GM23248 (cell line): ENCODE measurements at regions of chr10 and their contacts with region 1.

Region 1: DNA sequence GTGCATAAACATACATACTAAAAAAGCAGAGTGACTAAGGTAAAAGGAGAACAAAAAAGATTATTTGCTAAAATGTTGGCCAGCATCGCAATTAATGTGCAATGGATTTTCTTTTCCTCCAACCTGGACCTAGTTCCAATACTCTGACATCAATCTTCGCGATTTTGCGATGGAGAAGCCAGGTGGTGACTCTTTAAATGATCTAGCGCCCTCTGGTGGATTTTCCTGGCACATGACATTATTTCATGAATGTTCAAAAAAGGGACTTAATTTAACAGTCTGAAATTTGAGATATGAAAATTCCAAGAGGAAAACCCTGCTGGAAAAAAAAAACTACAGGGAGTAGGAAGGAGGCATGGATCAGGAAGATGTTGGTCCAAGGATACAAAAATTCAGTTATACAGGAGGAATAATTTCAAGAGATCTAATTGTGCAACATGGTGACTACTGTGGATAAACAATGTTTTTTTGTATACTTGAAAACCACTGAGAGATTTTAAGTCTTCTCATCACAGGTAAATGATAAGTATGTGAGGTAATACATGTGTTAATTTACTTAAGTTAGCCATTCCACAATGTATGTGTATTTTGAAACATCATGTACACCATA is 4.3 kb upstream of the KCNMA1 start:
- DNase-seq: peak; percentile 84
- H3K4me3 ChIP-seq: no peak overlapping the region
- H3K27ac ChIP-seq: no peak overlapping the region
- H3K4me1 ChIP-seq: no peaks in the 10 kb centered on the region
- H3K27me3 ChIP-seq: peaks cover 3% of the 10 kb centered on the region

Region 2: GRCh38 chr10:77173615-77174461 is 468.1 kb before region 1 on chr10:
- in situ Hi-C with region 1: loop called (anchors 5 kb)
- DNase-seq: peak; percentile 77
- H3K4me3 ChIP-seq: no peak overlapping the region
- H3K27ac ChIP-seq: no peak overlapping the region
- H3K4me1 ChIP-seq: peaks cover 3% of the 10 kb centered on the region
- H3K27me3 ChIP-seq: no peaks in the 10 kb centered on the region

Region 3: GRCh38 chr10:77251297-77252013 is 390.4 kb before region 1 on chr10:
- in situ Hi-C with region 1: loop called (anchors 10 kb)
- DNase-seq: peak; percentile 58
- H3K4me3 ChIP-seq: no peak overlapping the region
- H3K27ac ChIP-seq: no peak overlapping the region
- H3K4me1 ChIP-seq: peaks cover 4% of the 10 kb centered on the region
- H3K27me3 ChIP-seq: no peaks in the 10 kb centered on the region

Region 4: DNA sequence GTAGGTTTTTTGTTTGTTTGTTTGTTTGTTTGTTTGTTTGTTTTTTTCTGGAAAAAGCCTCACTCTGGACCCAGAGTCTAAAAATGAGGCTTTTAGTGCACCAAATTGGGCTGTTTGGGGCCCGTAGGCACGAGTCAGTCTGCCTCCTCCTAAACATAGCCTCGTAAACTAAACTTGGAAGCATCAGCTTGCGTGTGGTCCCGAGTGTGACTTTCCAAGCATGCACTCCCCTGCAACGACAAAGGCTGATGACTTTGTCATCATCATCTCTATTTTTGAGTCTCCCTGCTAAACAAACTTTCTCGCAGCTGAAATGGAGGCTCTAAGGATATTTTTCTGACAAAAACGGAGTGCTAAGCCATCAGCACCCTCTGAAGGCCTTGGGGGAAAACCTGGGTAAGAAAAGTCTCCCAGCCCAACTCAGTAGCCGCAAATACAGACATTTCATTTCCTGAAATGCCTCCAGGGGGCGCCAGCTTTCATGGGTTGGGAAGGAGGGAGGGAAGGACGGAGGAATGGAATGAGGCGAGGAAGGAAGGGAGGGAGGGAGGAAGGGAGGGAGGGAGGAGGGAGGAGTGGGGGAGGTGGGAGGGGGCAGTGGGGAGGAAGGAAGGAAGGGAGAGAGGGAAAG is 250.2 kb before region 1 on chr10:
- in situ Hi-C with region 1: loop called (anchors 10 kb)
- DNase-seq: peak; percentile 88
- H3K4me3 ChIP-seq: no peak overlapping the region
- H3K27ac ChIP-seq: peak overlapping the region; percentile 78
- H3K4me1 ChIP-seq: peaks cover 47% of the 10 kb centered on the region
- H3K27me3 ChIP-seq: no peaks in the 10 kb centered on the region

Region 5: DNA sequence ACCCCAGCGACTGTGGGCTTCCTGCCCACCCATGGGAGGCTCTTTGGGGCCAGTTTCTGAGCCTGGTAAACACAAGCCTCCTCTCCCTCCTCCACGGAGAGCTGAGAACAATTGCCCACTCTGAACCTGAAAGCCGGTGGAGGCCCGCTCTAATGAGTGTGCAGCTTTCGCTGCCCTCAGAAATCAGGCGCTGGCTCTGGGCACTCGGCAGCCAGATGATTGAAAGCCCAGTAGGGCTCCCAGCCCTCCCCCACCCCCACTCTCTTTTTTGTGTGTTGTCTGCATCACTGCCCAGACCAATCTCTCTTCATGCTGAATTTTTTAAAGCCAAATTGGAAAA is 830.6 kb after region 1 on chr10:
- in situ Hi-C with region 1: no loop called
- DNase-seq: no peak
- H3K4me3 ChIP-seq: no peak overlapping the region
- H3K27ac ChIP-seq: no peak overlapping the region
- H3K4me1 ChIP-seq: no peaks in the 10 kb centered on the region
- H3K27me3 ChIP-seq: peaks cover 11% of the 10 kb centered on the region